Left ventricle myocardium inferior (tissue), 1 donor: ENCODE measurements at regions of chr11 and their contacts with region 1.

Region 1: DNA sequence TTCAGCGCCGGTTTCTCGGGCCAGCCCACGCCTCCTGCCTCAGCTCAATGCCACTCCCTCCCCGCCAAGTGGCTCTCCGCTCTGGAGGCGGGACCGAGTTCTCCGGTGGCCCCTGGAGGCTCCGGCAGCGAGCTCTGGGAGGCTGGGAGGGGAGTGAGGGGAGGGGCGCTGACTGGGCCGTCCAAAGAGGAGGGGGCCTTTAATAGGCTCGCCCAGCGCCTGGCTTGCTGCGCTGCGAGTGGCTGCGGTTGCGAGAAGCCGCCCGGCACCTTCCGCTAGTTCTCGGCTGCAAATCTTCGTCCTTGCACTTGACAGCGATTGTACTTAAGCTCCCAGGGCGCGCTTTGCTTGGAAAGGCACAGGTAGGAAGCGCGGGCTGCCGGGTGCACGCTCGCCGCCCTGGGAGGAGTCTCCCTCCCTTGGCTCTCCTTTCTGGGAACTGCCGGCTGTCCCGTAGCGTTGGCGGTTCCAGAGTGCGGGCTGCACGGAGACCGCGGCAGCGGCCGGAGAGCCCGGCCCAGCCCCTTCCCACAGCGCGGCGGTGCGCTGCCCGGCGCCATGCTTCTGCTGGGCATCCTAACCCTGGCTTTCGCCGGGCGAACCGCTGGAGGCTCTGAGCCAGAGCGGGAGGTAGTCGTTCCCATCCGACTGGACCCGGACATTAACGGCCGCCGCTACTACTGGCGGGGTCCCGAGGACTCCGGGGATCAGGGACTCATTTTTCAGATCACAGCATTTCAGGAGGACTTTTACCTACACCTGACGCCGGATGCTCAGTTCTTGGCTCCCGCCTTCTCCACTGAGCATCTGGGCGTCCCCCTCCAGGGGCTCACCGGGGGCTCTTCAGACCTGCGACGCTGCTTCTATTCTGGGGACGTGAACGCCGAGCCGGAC is at the start of gene ADAMTS15:
- DNase-seq: peak; percentile 91
- H3K4me3 ChIP-seq: peak within 1 kb of the TSS; percentile 91
- H3K27ac ChIP-seq: peak within 1 kb of the TSS; percentile 93
- H3K4me1 ChIP-seq: peaks cover 58% of the 10 kb centered on the region
- H3K27me3 ChIP-seq: no peaks in the 10 kb centered on the region
- CTCF ChIP-seq: no peak
- total RNA-seq, gene ADAMTS15: 22.9 TPM

Region 2: GRCh38 chr11:130261571-130261970 is 187.1 kb before region 1 on chr11:
- intact Hi-C with region 1: no loop called
- DNase-seq: no peak
- H3K4me3 ChIP-seq: no peak overlapping the region
- H3K27ac ChIP-seq: no peak overlapping the region
- H3K4me1 ChIP-seq: peaks cover 28% of the 10 kb centered on the region
- H3K27me3 ChIP-seq: no peaks in the 10 kb centered on the region
- CTCF ChIP-seq: no peak

Region 3: GRCh38 chr11:130522284-130522961 is 73.8 kb after region 1 on chr11:
- intact Hi-C with region 1: loop called (anchors 5 kb)
- DNase-seq: peak; percentile 94
- H3K4me3 ChIP-seq: peak overlapping the region; percentile 21
- H3K27ac ChIP-seq: peak overlapping the region; percentile 94
- H3K4me1 ChIP-seq: peaks cover 70% of the 10 kb centered on the region
- H3K27me3 ChIP-seq: no peaks in the 10 kb centered on the region
- CTCF ChIP-seq: no peak

Region 4: GRCh38 chr11:130601141-130601540 is 152.5 kb after region 1 on chr11:
- intact Hi-C with region 1: loop called (anchors 10 kb)
- DNase-seq: peak; percentile 83
- H3K4me3 ChIP-seq: no peak overlapping the region
- H3K27ac ChIP-seq: peak overlapping the region; percentile 66
- H3K4me1 ChIP-seq: peaks cover 36% of the 10 kb centered on the region
- H3K27me3 ChIP-seq: no peaks in the 10 kb centered on the region
- CTCF ChIP-seq: no peak